Mammary epithelial cell (primary cell): ENCODE measurements at regions of chr1 and their contacts with region 1.

Region 1: GRCh38 chr1:89826594-89826993 is 5.8 kb downstream of the LRRC8D start:
- DNase-seq: peak; percentile 88
- H3K4me3 ChIP-seq: no peak overlapping the region
- H3K27ac ChIP-seq: no peak overlapping the region
- H3K4me1 ChIP-seq: peaks cover 21% of the 10 kb centered on the region
- H3K27me3 ChIP-seq: no peaks in the 10 kb centered on the region
- CTCF ChIP-seq: no peak

Region 2: GRCh38 chr1:89701746-89702241 is 124.8 kb before region 1 on chr1:
- CTCF ChIA-PET with region 1: no interaction called
- dilution Hi-C with region 1: no loop called
- in situ Hi-C with region 1: no loop called
- intact Hi-C with region 1: no loop called
- DNase-seq: no peak
- H3K4me3 ChIP-seq: no peak overlapping the region
- H3K27ac ChIP-seq: no peak overlapping the region
- H3K4me1 ChIP-seq: no peaks in the 10 kb centered on the region
- H3K27me3 ChIP-seq: no peaks in the 10 kb centered on the region
- CTCF ChIP-seq: no peak

Region 3: DNA sequence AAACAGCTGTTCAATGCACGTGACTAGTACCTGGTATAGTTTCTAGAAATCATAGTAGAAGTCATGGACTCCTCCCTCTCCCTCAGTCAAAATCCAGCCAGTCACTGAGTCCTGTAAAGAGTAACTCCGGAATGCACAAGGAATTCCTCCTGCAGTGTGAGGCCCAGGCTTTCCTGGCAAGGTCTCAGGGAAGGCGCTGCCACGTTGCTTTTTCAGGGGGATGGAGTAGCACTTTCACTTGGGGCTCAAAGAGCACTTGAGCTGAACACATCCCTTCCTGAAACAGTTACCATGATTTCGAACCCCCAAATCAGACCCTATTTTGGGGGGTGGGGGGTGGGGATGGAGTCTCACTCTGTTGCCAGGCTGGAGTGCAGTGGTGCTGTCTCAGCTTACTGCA is 32.2 kb before region 1 on chr1:
- CTCF ChIA-PET with region 1: no interaction called
- dilution Hi-C with region 1: loop called (anchors 5 kb)
- in situ Hi-C with region 1: no loop called
- intact Hi-C with region 1: no loop called
- DNase-seq: no peak
- H3K4me3 ChIP-seq: no peak overlapping the region
- H3K27ac ChIP-seq: no peak overlapping the region
- H3K4me1 ChIP-seq: no peaks in the 10 kb centered on the region
- H3K27me3 ChIP-seq: no peaks in the 10 kb centered on the region
- CTCF ChIP-seq: no peak